ENCODE measurements at regions of chr12 and their contacts with region 1.

Region 1: GRCh38 chr12:132153501-132154340 is 9.5 kb downstream of the NOC4L start:
- DNase-seq: peak; percentile 45 to 83 (median 58)
- ATAC-seq: peak; percentile 85 to 96 (median 90)
- H3K4me3 ChIP-seq: peak overlapping the region in 10 of 12 donors; percentile 10 to 52 (median 30)
- H3K27ac ChIP-seq: no peak overlapping the region
- H3K4me1 ChIP-seq: peaks cover 0 to 12% (median 4%) of the 10 kb centered on the region in 12 donors
- H3K27me3 ChIP-seq: no peaks in the 10 kb centered on the region
- CTCF ChIP-seq: peak; percentile 84 to 94 (median 90)
- POLR2A ChIP-seq: no peak

Region 2: DNA sequence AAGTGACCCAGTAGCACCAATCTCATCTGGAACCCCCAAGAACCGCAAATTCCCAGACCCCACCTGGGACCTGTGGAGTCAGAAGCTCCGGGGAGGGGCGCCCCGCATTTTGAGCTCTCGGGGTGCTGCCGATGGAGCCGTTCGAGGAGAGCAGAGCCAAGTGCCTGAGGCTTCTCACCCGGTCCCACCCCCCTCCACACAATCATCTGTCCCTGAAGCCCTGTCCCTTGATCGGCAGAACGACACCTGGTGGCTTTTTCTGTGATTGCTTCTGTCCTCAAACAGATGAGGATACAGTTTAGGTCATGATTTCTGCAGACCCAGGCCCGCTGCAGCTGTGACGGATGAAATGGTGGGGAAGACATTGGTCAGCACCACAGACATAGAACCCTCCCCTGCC is 65.2 kb after region 1 on chr12:
- intact Hi-C with region 1: loop called in 3 of 10 experiments (anchors 2 kb)
- DNase-seq: peak in 1 of 5 donors; percentile 38
- ATAC-seq: no peak
- H3K4me3 ChIP-seq: no peak overlapping the region
- H3K27ac ChIP-seq: no peak overlapping the region
- H3K4me1 ChIP-seq: no peaks in the 10 kb centered on the region
- H3K27me3 ChIP-seq: peaks cover 0 to 37% (median 3%) of the 10 kb centered on the region in 9 donors
- CTCF ChIP-seq: peak in 6 of 12 donors; percentile 6 to 34 (median 24)
- POLR2A ChIP-seq: no peak

Region 3: GRCh38 chr12:132414634-132415326 is 261.1 kb after region 1 on chr12:
- intact Hi-C with region 1: loop called in 6 of 10 experiments (anchors 2 to 10 kb)
- DNase-seq: peak; percentile 79 to 88 (median 83)
- ATAC-seq: peak; percentile 90 to 97 (median 94)
- H3K4me3 ChIP-seq: no peak overlapping the region
- H3K27ac ChIP-seq: no peak overlapping the region
- H3K4me1 ChIP-seq: peaks cover 0 to 9% (median 6%) of the 10 kb centered on the region in 12 donors
- H3K27me3 ChIP-seq: peaks cover 5 to 63% (median 31%) of the 10 kb centered on the region in 9 donors
- CTCF ChIP-seq: peak; percentile 89 to 97 (median 94)
- POLR2A ChIP-seq: no peak

Region 4: DNA sequence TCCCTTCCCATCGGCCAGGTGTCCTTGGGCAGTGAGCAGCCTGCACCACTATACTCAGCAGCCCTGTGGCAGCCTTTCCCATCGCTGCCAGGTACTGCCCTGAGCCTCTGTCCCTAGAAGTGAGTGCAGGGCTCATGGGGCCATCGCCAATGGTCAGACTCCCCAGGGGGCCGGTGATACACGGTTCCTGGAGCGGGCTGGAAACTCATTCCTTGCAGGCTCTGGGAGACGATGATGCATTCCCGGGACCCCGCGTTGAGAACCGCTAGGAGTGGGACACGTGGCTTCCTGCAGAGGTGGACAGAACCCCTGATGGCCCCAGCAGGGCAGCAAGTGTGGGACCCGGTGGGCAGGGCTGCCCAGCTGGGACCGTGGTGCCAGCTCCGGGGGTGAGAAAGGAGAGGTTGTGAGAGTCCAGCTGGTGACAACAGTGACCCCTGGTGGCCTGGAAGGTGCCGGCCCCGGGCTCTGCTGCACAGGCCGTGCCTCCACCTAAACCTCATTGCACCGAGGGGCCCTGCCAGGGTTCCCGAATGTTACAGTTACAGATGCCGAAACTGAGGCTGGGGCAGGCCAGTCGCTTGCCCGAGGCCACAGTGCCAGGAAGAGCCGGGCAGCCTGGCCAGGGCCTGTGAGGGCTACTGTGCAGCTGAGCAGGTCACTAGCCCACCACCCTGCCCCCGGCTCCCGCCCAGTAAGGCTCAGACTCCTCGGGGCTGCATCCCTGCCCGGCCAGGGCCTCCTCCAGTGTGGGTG is 370.0 kb after region 1 on chr12:
- intact Hi-C with region 1: loop called in 1 of 10 experiments (anchors 10 kb)
- DNase-seq: peak; percentile 62 to 84 (median 73)
- ATAC-seq: peak; percentile 54 to 76 (median 65)
- H3K4me3 ChIP-seq: no peak overlapping the region
- H3K27ac ChIP-seq: no peak overlapping the region
- H3K4me1 ChIP-seq: peaks cover 0 to 64% (median 9%) of the 10 kb centered on the region in 12 donors
- H3K27me3 ChIP-seq: no peaks in the 10 kb centered on the region
- CTCF ChIP-seq: peak; percentile 72 to 90 (median 83)
- POLR2A ChIP-seq: no peak

Region 5: GRCh38 chr12:132614861-132615578 is 461.3 kb after region 1 on chr12:
- intact Hi-C with region 1: loop called in 8 of 10 experiments (anchors 2 to 10 kb)
- DNase-seq: peak; percentile 79 to 91 (median 85)
- ATAC-seq: peak; percentile 86 to 94 (median 91)
- H3K4me3 ChIP-seq: no peak overlapping the region
- H3K27ac ChIP-seq: no peak overlapping the region
- H3K4me1 ChIP-seq: peaks cover 0 to 17% (median 2%) of the 10 kb centered on the region in 12 donors
- H3K27me3 ChIP-seq: peaks cover 36 to 61% (median 53%) of the 10 kb centered on the region in 9 donors
- CTCF ChIP-seq: peak; percentile 82 to 93 (median 88)
- POLR2A ChIP-seq: no peak

Region 6: DNA sequence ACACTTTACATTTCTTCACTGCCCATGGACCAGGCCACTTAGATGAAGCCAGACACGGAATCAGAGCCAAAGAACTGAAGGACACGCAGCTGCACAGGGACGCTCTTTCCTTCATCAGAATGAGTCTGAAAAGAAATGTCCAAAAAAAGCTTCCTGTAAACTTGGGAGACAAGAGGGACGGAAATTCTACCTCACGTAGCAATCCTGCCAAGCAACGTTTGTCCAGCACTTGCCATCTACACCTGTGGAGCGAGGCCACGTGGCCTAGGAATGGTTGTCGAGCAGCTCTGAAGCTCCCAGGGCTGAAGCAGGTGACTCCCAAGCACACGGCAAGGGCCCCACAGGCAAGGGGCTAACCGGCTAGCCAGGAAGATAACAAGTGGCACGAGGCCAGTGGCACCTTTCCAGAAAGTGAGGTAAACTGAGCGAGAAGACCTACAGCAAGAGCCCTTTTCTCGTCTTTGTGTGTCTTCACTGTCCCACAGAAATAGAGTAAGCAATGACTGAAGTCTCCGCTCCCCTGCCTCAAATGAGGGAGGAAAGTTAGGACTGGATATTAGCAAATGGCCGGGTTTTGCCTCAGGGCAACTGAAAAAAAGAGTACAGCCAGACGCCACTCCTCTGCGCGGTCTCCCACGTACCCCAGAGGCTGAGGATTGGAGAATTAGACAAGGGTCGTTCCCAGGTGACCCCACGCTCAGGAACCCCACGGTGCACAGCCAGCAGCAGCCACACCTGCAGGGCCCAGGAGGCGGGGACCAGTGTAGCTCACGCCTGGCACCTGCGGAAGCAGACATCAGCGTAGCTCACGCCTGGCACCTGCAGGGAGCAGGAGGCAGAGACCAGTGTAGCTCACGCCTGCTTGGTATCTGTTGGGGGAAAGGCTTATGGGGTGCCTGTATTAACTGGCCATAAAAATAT is 794.7 kb after region 1 on chr12:
- intact Hi-C with region 1: loop called in 1 of 10 experiments (anchors 10 kb)
- DNase-seq: no peak
- ATAC-seq: no peak
- H3K4me3 ChIP-seq: no peak overlapping the region
- H3K27ac ChIP-seq: no peak overlapping the region
- H3K4me1 ChIP-seq: peaks cover 0 to 5% (median 0%) of the 10 kb centered on the region in 12 donors
- H3K27me3 ChIP-seq: no peaks in the 10 kb centered on the region
- CTCF ChIP-seq: no peak
- POLR2A ChIP-seq: no peak